Cardiac septum (tissue), 1 donor: ENCODE measurements at regions of chr5 and their contacts with region 1.

Region 1: DNA sequence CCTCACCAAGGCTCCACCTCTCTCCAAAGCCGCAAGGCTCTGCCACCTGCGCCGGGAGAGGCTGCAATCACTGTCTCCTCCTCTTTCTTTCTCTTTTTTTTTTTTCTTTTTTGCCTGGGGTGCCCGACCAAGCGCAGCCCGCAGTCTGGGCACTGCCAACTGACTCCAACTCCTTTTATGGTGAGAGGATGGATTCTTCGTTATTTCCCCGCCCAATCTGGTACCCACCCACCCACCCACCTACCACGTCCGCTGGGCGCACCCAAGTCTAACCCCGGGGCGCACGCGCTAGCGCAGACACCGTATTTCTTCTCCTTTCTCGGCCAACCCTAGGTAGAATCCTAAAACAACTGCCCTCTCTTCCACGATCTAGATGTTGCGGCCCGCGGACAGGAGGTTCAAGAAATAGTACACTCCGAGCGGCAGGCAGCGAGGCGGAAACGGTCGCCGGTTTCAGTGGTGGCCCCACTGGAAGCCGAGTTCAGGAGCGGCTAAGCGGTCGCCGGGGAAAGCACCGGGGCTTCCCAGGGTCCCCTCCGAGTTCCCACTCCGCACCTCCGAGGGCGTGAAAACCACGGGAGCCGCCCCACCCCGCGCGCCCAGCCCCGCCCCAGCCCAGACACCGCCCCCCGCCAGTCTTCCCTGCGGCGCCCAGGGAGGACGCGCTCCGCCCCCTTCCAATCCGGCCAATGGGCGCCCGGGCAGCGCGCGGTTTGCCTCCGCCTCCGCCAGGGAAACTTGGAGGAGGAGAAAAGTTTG is 381 bp upstream of the PTGER4 start:
- DNase-seq: peak; percentile 98

Region 2: GRCh38 chr5:40021007-40021406 is 658.3 kb before region 1 on chr5:
- intact Hi-C with region 1: loop called (anchors 10 kb)
- DNase-seq: no peak

Region 3: DNA sequence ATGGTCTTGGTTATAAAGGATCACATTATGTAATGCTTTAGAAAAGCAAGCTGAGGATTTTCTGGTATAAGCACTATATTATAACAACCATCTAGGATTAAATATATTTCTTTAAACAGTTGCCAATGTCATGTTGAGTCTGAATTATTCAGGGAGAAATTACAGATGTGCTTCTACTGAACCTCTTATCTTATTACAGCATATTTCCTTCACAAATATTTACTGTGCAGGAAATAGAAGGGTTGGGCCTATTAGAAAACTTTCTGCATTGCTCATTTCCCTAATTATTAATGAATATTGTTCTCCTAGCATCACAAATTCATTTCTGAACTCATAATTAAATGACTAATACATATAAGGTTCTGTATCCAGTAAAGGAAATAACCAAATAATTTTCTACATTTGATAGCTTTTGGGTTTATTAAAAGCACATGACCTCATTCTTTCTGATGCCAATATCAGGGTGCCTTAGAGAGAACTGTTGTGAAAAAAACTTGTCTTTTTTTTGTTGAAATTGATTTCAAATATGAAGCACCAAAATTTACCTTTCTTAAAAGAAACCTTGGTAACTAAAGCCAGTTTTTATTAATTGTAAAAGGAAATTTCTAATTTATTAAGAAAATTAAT is 476.4 kb before region 1 on chr5:
- intact Hi-C with region 1: loop called (anchors 5 kb)
- DNase-seq: no peak

Region 4: DNA sequence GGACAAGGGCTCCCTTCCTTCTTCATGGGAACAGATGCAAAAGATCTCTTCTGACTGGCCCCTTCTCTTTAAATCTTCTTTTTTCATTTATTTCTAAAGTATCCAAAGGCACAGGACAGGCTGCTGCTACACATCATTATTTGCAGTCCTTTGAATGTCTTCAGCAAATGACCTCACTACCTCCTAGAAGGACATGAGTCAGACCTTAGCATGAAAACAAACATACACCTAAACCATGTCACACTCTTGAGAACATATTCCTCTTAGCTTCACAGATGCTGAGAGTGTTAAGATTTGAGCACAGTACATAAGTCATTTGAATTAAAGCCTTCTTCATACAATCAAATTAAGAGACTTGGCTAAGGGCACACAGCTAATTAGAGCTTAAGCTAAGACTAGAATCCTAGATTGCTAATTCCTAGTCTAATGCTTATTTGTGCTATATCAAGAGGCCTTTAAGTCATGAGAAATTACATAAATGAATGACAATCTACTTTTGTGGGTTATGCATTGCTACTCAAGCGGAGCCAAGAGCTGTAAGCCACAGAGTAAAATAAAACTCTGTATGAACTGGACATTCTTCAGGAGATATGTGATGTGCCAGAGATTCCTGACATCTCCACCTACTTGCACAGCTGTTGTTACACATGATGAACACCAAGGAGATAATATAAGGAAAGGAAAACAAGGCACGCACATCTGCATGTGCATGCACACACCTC is 108.8 kb before region 1 on chr5:
- intact Hi-C with region 1: loop called (anchors 5 kb)
- DNase-seq: no peak

Region 5: GRCh38 chr5:40991168-40991980 is 312.0 kb after region 1 on chr5:
- intact Hi-C with region 1: no loop called
- DNase-seq: no peak

Region 6: GRCh38 chr5:41610402-41610801 is 931.1 kb after region 1 on chr5:
- intact Hi-C with region 1: no loop called
- DNase-seq: no peak